MCF 10A (cell line): ENCODE measurements at regions of chr19 and their contacts with region 1.

Region 1: DNA sequence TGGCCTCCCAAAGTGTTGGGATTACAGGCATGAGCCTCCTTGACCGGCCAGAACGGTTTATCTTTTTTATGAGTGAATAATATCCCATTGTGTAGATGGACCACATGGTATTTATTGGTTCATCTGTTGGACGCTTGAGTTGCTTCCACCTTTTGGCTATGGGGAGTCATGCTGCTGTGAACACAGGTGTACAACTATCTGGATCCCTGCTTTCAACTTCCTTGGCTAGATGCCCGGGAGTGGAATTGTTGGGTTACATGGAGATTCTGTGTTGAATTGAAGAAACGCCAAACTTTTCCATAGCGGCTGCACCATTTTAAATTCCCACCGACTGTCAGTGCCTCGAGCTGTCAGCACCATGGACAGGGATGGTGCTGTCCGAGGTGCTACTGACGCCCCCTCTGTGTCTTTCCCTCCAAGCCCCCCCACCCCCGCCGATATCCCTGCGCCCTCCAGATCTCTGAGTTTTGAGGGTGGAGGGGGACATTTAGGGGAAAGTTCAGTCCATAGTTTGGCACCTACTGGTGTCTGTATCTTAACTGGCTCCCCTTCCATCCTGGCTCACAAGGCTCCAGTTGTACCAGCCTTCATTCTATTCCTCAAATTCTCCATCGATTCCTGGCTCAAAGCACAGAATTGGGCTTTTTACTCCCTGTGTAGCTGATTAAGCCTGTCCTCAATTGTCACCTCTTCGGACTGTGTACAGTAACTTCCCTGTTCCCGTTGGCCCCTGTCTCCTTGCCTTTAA is 27.3 kb downstream of the PNPLA6 start:
- DNase-seq: peak; percentile 54
- H3K4me3 Mint-ChIP-seq: no peak overlapping the region
- H3K27ac Mint-ChIP-seq: no peak overlapping the region
- H3K4me1 Mint-ChIP-seq: no peaks in the 10 kb centered on the region
- H3K27me3 Mint-ChIP-seq: no peaks in the 10 kb centered on the region
- CTCF ChIP-seq: no peak

Region 2: GRCh38 chr19:7582446-7582845 is 19.6 kb after region 1 on chr19:
- CTCF ChIA-PET with region 1: interaction called, 14 read pairs
- POLR2A ChIA-PET with region 1: interaction called, 3 read pairs
- intact Hi-C with region 1: no loop called
- DNase-seq: peak; percentile 53
- H3K4me3 Mint-ChIP-seq: no peak overlapping the region
- H3K27ac Mint-ChIP-seq: no peak overlapping the region
- H3K4me1 Mint-ChIP-seq: peaks cover 17% of the 10 kb centered on the region
- H3K27me3 Mint-ChIP-seq: peaks cover 25% of the 10 kb centered on the region
- CTCF ChIP-seq: no peak

Region 3: GRCh38 chr19:7618771-7619514 is 56.1 kb after region 1 on chr19:
- CTCF ChIA-PET with region 1: interaction called, 13 read pairs
- POLR2A ChIA-PET with region 1: interaction called, 5 read pairs
- intact Hi-C with region 1: no loop called
- DNase-seq: peak; percentile 76
- H3K4me3 Mint-ChIP-seq: no peak overlapping the region
- H3K27ac Mint-ChIP-seq: peak overlapping the region; percentile 86
- H3K4me1 Mint-ChIP-seq: peaks cover 15% of the 10 kb centered on the region
- H3K27me3 Mint-ChIP-seq: no peaks in the 10 kb centered on the region
- CTCF ChIP-seq: no peak

Region 4: DNA sequence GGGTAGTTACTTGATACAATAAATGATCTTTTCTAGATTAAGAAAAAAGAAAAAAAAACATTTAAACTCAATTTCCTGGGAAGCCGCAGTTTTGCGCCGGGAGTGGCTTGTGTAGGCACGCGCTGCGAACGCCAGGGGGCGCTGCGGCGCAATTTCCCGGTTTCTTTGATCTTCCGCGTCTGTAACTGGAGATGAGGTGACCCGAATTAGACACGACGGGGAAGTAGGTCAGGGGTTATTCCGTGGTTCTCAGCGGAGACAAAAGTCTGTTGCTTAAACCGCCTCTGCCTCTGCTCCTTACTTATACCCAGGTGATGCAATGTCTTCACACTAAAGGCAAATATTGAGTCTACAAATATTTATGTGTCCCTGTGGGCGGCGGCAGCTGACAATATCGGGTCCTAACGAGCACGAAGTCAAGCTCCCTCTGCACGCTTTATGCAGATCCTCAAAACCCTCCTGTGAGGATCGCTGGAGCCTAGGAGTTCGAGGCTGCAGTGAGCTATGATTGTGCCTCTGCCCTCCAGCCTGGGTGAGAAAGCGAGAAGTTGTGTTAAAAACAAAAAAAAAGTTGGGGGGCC is 89.3 kb after region 1 on chr19:
- CTCF ChIA-PET with region 1: interaction called, 10 read pairs
- POLR2A ChIA-PET with region 1: interaction called, 3 read pairs
- intact Hi-C with region 1: no loop called
- DNase-seq: peak; percentile 94
- H3K4me3 Mint-ChIP-seq: peak overlapping the region; percentile 66
- H3K27ac Mint-ChIP-seq: no peak overlapping the region
- H3K4me1 Mint-ChIP-seq: peaks cover 6% of the 10 kb centered on the region
- H3K27me3 Mint-ChIP-seq: no peaks in the 10 kb centered on the region
- CTCF ChIP-seq: peak; percentile 91

Region 5: DNA sequence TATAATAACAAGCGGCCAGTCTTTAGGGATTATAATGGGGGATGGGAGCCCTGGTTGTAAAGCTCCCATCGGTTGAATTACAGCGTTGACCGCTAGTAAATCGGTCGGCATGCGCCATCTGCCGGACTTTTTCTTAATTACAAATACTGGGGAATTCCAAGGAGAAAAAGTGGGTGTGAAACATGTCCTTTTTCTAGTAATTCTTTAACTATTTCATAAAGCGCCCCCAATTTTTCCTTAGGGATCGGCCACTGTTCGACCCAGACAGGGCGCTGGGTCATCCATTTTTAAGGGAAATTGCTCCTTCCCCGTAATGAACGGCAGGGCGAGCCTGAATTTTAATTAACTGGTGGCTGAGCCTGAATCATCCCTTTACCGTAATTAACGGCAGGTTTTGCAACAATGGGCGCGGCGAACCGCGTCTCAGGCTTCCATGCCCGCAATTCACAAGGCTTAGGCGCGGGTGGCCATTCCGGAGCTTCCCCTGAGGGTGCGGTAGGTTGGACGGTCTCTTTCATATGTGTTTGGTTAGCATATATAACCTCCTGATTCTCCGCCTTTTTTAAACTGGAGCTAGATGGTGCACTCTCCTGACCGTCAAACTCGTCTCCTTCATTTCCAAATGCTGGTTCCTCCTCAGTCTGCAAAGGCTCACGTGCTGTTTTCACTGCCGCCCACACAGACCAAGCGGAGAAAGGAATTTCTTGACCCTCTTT is 237.0 kb after region 1 on chr19:
- CTCF ChIA-PET with region 1: interaction called, 47 read pairs
- POLR2A ChIA-PET with region 1: interaction called, 11 read pairs
- intact Hi-C with region 1: loop called (anchors 1 kb)
- DNase-seq: peak; percentile 82
- H3K4me3 Mint-ChIP-seq: peak overlapping the region; percentile 22
- H3K27ac Mint-ChIP-seq: no peak overlapping the region
- H3K4me1 Mint-ChIP-seq: no peaks in the 10 kb centered on the region
- H3K27me3 Mint-ChIP-seq: no peaks in the 10 kb centered on the region
- CTCF ChIP-seq: peak; percentile 61